ENCODE measurements at regions of chr22 and their contacts with region 1.

Region 1: DNA sequence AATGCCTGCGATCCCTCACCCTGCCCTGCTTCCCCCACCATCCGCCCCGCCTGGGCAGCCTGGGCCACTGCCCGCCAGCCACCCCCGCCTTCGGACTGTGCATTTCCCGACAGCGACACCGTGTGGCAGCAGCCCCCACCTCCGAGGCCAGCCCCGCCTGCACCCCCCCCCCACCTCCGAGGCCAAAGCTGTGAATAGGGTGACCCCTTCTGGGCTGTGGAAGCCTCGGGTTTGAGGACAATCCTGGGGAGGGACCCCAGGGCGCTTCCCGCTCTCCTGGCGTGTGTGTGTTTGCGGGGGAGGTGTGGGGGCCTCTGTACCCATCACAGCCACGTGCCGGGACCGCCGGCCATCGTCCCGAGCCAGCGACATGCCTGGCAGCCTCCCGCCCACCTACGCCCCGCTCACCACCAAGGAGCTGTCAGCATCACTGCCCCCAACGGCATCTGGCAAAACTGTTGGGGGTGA is 33.8 kb upstream of the PPARA start:
- H3K4me3 ChIP-seq: no peak overlapping the region
- H3K27ac ChIP-seq: no peak overlapping the region
- H3K4me1 ChIP-seq: no peaks in the 10 kb centered on the region
- CTCF ChIP-seq: peak; percentile 98

Region 2: GRCh38 chr22:45994491-45995404 is 121.8 kb before region 1 on chr22:
- CTCF ChIA-PET with region 1: interaction called, 251 read pairs
- POLR2A ChIA-PET with region 1: no interaction called
- H3K4me3 ChIP-seq: no peak overlapping the region
- H3K27ac ChIP-seq: no peak overlapping the region
- H3K4me1 ChIP-seq: no peaks in the 10 kb centered on the region
- CTCF ChIP-seq: peak; percentile 95

Region 3: GRCh38 chr22:46013460-46014416 is 102.8 kb before region 1 on chr22:
- CTCF ChIA-PET with region 1: interaction called, 173 read pairs
- POLR2A ChIA-PET with region 1: interaction called, 3 read pairs
- H3K4me3 ChIP-seq: peak overlapping the region; percentile 67
- H3K27ac ChIP-seq: peak overlapping the region; percentile 88
- H3K4me1 ChIP-seq: peaks cover 5% of the 10 kb centered on the region; the same call in 1 of the 2 replicates
- CTCF ChIP-seq: peak; percentile 88

Region 4: DNA sequence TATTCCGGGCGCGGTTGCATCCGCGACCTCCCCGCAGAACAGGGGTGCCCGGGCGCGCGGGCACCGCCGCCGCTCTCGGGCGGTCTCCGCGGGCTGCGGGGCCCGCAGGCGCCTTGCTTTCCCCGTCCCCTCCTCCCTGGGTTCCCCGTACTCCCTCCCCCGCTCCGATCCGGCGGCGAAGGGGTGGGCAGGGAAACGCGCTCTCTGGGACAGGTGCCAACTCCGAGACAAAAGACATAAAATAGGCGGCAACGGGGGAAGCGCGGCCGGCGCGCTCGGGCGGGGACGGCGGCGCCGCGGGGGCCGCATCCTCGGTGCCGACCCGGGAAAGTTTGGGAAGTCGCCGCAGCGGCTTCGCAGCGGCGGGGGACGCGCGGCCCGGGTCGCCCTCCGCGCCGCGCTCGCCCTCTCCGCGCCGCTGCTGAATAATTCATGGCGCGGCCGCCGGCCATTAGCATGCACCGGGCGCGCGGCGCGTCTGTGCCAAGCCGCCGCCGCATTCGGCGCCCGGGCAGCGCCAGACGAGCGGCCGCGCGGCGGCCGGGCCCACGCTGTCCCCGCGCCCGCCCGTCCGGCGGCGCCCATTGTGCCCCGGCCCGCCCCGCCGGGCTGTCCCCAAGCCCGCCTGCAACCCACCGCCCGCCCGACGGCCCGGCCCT is 44.9 kb before region 1 on chr22:
- CTCF ChIA-PET with region 1: interaction called, 12 read pairs
- POLR2A ChIA-PET with region 1: no interaction called
- H3K4me3 ChIP-seq: peak overlapping the region; percentile 99
- H3K27ac ChIP-seq: peak overlapping the region; percentile 100
- H3K4me1 ChIP-seq: peaks cover 25% of the 10 kb centered on the region
- CTCF ChIP-seq: no peak

Region 5: DNA sequence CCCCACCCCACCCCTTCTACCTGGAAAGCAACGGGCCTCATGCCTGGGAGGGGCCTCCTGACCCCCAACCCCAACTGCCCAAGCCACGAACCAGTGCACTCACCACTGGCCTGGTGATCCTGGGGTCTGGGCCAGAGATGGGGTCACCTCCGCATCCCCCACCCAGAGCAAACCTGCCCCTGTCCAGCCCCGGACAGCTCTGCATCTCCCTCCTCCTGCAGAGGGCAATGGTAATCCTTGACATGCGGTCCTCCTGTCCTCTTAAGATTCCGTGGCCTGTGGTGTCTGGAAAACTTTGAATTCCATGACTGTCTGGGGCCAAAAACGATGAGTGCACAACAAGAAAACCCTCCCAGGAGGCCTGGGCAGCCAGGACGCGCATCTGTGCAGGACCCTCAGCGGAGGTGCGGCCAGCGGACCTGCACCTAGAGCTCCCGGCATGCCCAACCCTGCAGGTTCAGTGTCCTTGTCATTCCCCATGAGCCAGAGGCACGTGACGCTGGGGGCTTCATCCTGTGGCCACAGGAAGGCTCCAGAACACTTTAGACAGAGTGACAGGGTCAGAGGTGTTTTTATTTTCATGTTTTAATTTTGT is 17.7 kb after region 1 on chr22:
- CTCF ChIA-PET with region 1: interaction called, 11 read pairs
- POLR2A ChIA-PET with region 1: no interaction called
- H3K4me3 ChIP-seq: no peak overlapping the region
- H3K27ac ChIP-seq: no peak overlapping the region
- H3K4me1 ChIP-seq: no peaks in the 10 kb centered on the region
- CTCF ChIP-seq: no peak

Region 6: DNA sequence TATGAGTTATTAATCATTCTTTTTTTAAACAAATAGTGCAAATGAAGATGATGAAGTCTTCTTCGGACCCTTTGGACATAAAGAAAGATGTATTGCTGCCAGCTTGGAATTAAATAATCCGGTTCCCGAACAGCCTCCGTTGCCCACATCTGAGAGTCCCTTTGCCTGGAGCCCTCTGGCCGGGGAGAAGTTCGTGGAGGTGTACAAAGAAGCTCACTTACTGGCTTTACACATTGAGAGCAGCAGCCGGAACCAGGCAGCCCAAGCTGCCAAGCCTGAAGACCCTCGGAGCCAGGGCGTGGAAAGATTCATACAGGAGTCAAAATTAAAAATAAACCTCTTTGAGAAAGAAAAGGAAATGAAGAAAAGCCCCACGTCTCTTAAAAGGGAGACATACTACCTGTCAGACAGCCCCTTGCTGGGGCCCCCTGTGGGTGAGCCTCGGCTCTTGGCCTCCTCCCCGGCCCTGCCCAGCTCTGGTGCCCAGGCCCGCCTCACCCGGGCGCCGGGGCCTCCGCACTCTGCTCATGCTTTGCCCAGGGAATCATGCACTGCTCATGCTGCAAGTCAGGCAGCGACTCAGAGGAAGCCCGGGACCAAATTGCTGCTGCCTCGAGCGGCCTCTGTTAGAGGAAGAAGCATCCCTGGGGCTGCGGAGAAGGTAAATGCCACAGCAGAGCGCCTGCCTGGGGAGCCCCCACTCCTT is 191.9 kb after region 1 on chr22:
- CTCF ChIA-PET with region 1: interaction called, 65 read pairs
- POLR2A ChIA-PET with region 1: no interaction called
- H3K4me3 ChIP-seq: no peak overlapping the region
- H3K27ac ChIP-seq: no peak overlapping the region
- H3K4me1 ChIP-seq: no peaks in the 10 kb centered on the region
- CTCF ChIP-seq: no peak